ENCODE measurements at regions of chr22 and their contacts with region 1.

Region 1: GRCh38 chr22:50170453-50171318 is at the start of gene PANX2:
- DNase-seq: no peak
- ATAC-seq: no peak
- H3K4me3 Mint-ChIP-seq: peak within 1 kb of the TSS; percentile 64
- H3K27ac Mint-ChIP-seq: no peak within 1 kb of the TSS
- H3K4me1 Mint-ChIP-seq: peaks cover 27% of the 10 kb centered on the region
- H3K27me3 Mint-ChIP-seq: peaks cover 23% of the 10 kb centered on the region
- CTCF ChIP-seq: no peak
- total RNA-seq, gene PANX2: 0.27 and 0.44 TPM in 2 replicates

Region 2: GRCh38 chr22:50141891-50142363 is 28.8 kb before region 1 on chr22:
- CTCF ChIA-PET with region 1: no interaction called
- POLR2A ChIA-PET with region 1: no interaction called
- intact Hi-C with region 1: no loop called
- DNase-seq: no peak
- ATAC-seq: no peak
- H3K4me3 Mint-ChIP-seq: no peak overlapping the region
- H3K27ac Mint-ChIP-seq: no peak overlapping the region
- H3K4me1 Mint-ChIP-seq: no peaks in the 10 kb centered on the region
- H3K27me3 Mint-ChIP-seq: peaks cover 11% of the 10 kb centered on the region
- CTCF ChIP-seq: no peak

Region 3: GRCh38 chr22:50200461-50201190 is 29.9 kb after region 1 on chr22 and contains the start of gene SELENOO:
- CTCF ChIA-PET with region 1: no interaction called
- POLR2A ChIA-PET with region 1: interaction called, 3 read pairs
- intact Hi-C with region 1: loop called (anchors 2 kb)
- DNase-seq: peak; percentile 88
- ATAC-seq: peak; percentile 93
- H3K4me3 Mint-ChIP-seq: peak within 1 kb of the TSS; percentile 85
- H3K27ac Mint-ChIP-seq: peak within 1 kb of the TSS; percentile 35
- H3K4me1 Mint-ChIP-seq: peaks cover 26% of the 10 kb centered on the region
- H3K27me3 Mint-ChIP-seq: no peaks in the 10 kb centered on the region
- CTCF ChIP-seq: no peak
- total RNA-seq, gene SELENOO: 33.9 and 39.0 TPM in 2 replicates

Region 4: GRCh38 chr22:50348058-50348457 is 177.4 kb after region 1 on chr22:
- CTCF ChIA-PET with region 1: no interaction called
- POLR2A ChIA-PET with region 1: no interaction called
- intact Hi-C with region 1: no loop called
- DNase-seq: no peak
- ATAC-seq: no peak
- H3K4me3 Mint-ChIP-seq: no peak overlapping the region
- H3K27ac Mint-ChIP-seq: no peak overlapping the region
- H3K4me1 Mint-ChIP-seq: no peaks in the 10 kb centered on the region
- H3K27me3 Mint-ChIP-seq: no peaks in the 10 kb centered on the region
- CTCF ChIP-seq: no peak